Natural killer cell (primary cell): ENCODE measurements at regions of chr3 and their contacts with region 1.

Region 1: DNA sequence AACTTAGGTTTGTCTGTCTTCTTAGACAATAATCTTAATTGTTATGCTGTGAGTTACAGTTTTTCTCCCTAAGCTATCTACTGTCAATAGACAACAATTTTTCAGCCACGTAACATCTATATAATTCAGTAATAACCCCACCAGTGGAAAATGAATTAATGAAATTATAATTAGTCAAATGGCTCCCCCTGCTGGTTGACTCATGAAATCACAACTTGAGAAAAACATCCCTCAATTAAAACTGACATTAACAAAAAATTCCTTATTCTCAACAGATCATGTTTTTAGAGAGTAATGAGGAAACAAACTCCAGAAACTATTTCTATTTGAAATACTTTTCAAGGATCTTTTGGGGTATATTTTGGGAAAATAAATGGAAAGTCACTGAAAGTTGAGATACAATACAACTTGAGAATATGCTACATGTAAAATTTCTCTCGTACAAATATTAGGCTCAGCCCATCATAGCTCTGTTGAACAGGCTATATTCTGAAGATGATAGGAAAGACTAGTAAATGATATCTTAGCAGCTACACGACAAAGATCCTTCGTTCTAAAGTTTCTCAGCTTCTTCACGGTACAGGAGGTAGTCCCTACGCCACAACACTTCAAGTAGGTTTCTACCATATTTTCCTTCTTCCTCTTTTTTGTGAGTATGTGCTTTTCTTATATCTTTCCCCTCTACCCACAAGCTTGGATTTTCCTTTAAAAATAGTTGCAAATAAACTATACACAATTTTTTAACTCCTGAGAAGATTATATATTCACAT is 20.7 kb downstream of the PPP1R2 start:
- DNase-seq: peak in 1 of 2 donors; percentile 72
- ATAC-seq: peak in 2 of 3 donors; percentile 33 to 59
- H3K4me3 ChIP-seq: no peak overlapping the region
- H3K4me3 Mint-ChIP-seq: no peak overlapping the region
- H3K27ac ChIP-seq: no peak overlapping the region
- H3K27ac Mint-ChIP-seq: peak overlapping the region; percentile 29 to 67
- H3K4me1 ChIP-seq: no peaks in the 10 kb centered on the region
- H3K4me1 Mint-ChIP-seq: peaks cover 9 to 17% of the 10 kb centered on the region in 2 donors
- H3K27me3 ChIP-seq: no peaks in the 10 kb centered on the region
- H3K27me3 Mint-ChIP-seq: no peaks in the 10 kb centered on the region
- CTCF ChIP-seq: peak; percentile 95

Region 2: DNA sequence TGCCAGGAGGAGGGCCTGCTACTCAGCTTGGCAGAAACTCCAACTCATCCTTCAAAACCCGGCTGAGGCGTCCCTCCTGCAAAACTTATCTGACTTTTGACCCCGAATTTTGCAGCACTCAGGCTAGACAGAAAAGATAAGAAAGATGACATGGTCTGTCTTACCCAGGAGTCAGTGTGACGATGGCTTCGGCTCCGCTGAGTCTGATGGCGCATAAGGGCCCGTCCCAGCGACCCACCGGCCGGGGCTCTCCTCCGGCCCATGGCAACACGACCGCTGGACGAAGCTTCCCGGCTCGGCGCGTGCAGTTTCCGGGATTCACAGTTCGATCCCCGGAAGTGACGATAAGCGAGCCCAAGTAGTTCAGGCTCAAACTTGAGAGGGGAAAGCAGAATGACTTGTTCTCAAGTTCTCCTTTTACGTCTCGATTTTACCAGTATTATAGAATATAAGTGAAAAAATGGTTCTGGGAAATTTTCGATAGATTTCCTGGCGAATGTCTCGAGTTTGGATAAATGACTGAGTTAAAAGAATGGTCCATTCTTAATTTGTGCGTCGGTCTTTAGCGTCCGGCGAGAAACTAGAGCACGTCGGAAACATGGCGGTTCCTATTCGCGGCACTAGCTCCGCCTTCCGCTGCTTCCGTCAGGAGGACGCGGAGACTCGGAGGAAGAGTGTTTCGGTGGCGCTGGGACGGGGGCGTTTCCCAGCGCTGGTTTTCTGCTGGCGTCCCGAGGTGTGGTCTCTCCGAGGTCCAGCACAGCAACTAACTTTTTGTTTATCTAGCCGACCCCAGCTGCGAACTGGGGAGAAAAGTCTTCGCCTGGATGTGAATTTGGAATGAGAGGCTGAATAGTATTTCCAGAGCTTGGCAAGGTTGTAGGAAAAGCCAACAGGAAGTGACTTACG is 850.3 kb before region 1 on chr3 and contains the start of gene LSG1:
- intact Hi-C with region 1: loop called (anchors 5 kb)
- DNase-seq: peak; percentile 87 to 97
- ATAC-seq: peak; percentile 96
- H3K4me3 ChIP-seq: peak within 1 kb of the TSS; percentile 97
- H3K4me3 Mint-ChIP-seq: peak within 1 kb of the TSS; percentile 98
- H3K27ac ChIP-seq: peak within 1 kb of the TSS; percentile 98
- H3K27ac Mint-ChIP-seq: peak within 1 kb of the TSS; percentile 98 to 99
- H3K4me1 ChIP-seq: peaks cover 14% of the 10 kb centered on the region
- H3K4me1 Mint-ChIP-seq: peaks cover 29 to 40% of the 10 kb centered on the region in 2 donors
- H3K27me3 ChIP-seq: no peaks in the 10 kb centered on the region
- H3K27me3 Mint-ChIP-seq: peaks cover 0 to 6% of the 10 kb centered on the region in 2 donors
- CTCF ChIP-seq: no peak
- total RNA-seq, gene LSG1: 56.4 to 67.6 (median 64.9) TPM

Region 3: GRCh38 chr3:195542698-195543499 is 20.5 kb after region 1 on chr3 and contains the start of gene PPP1R2:
- intact Hi-C with region 1: loop called (anchors 2 kb)
- DNase-seq: peak; percentile 94 to 97
- ATAC-seq: peak; percentile 91 to 97 (median 92)
- H3K4me3 ChIP-seq: peak within 1 kb of the TSS; percentile 86
- H3K4me3 Mint-ChIP-seq: peak within 1 kb of the TSS; percentile 89
- H3K27ac ChIP-seq: peak within 1 kb of the TSS; percentile 95
- H3K27ac Mint-ChIP-seq: peak within 1 kb of the TSS; percentile 94 to 95
- H3K4me1 ChIP-seq: peaks cover 55% of the 10 kb centered on the region
- H3K4me1 Mint-ChIP-seq: peaks cover 80 to 84% of the 10 kb centered on the region in 2 donors
- H3K27me3 ChIP-seq: no peaks in the 10 kb centered on the region
- H3K27me3 Mint-ChIP-seq: no peaks in the 10 kb centered on the region
- CTCF ChIP-seq: no peak
- total RNA-seq, gene PPP1R2: 89.8 to 97.3 (median 89.9) TPM

Region 4: DNA sequence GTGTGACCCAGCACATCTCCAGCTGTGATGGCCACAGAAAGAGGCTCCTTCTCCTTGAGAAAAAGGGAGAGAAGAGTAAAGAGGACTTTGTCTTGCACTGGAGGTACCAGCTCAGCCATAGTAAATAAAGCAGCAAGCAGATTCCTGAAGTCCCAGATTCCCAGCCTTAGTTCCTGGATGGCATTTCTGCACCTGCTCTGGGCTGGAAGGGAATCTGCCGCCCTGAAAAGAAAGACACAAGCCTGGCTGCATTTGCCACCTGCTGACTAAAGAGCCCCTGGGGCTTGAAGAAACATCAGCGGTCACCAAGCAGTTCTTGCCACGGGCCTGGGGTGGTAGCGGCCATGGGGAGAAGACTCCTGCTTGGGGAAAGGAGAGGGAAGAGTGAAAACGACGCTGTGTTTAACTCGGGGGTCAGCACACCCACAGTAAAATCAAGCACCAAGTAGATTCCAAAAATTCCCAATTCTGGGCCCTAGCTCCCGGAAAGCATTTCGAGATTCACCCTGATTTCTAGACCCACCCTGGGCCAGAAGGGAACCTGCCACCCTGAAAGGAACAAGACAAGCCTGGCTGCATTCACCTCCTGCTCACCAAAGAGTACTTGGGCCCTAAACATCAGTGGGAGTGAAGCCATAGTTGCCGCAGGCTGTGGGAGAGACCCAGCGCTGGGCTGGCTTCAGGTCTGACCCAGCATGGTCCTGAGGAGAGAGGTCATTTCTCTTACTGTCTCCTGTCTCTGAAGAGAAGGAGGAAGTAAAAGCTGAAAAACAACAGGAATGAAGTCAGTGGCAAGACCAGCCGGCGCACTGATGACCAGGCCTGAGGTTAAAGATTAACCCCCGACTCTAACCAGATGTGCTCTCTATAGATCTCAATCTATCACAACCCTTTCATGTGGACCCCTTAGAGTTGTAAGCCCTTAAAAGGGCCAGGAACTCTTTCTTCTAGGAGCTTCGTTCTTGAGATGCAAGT is 410.3 kb after region 1 on chr3:
- intact Hi-C with region 1: no loop called
- DNase-seq: no peak
- ATAC-seq: no peak
- H3K4me3 ChIP-seq: no peak overlapping the region
- H3K4me3 Mint-ChIP-seq: no peak overlapping the region
- H3K27ac ChIP-seq: no peak overlapping the region
- H3K27ac Mint-ChIP-seq: no peak overlapping the region
- H3K4me1 ChIP-seq: no peaks in the 10 kb centered on the region
- H3K4me1 Mint-ChIP-seq: no peaks in the 10 kb centered on the region
- H3K27me3 ChIP-seq: no peaks in the 10 kb centered on the region
- H3K27me3 Mint-ChIP-seq: no peaks in the 10 kb centered on the region
- CTCF ChIP-seq: no peak

Region 5: GRCh38 chr3:196670339-196670738 is 1147.9 kb after region 1 on chr3:
- intact Hi-C with region 1: no loop called
- DNase-seq: no peak
- ATAC-seq: no peak
- H3K4me3 ChIP-seq: no peak overlapping the region
- H3K4me3 Mint-ChIP-seq: no peak overlapping the region
- H3K27ac ChIP-seq: no peak overlapping the region
- H3K27ac Mint-ChIP-seq: peak overlapping the region; percentile 75
- H3K4me1 ChIP-seq: peaks cover 8% of the 10 kb centered on the region
- H3K4me1 Mint-ChIP-seq: peaks cover 18 to 22% of the 10 kb centered on the region in 2 donors
- H3K27me3 ChIP-seq: no peaks in the 10 kb centered on the region
- H3K27me3 Mint-ChIP-seq: no peaks in the 10 kb centered on the region
- CTCF ChIP-seq: no peak